Activated naive CD4-positive, alpha-beta T cell treated with anti-CD3 and anti-CD28 coated beads for 36 hours (primary cell): ENCODE measurements at regions of chr6 and their contacts with region 1.

Region 1: GRCh38 chr6:127855542-127856159 is 45.2 kb downstream of the THEMIS start:
- DNase-seq: peak; percentile 79
- H3K4me3 Mint-ChIP-seq: peak overlapping the region; percentile 54
- H3K27ac Mint-ChIP-seq: peak overlapping the region; percentile 59
- H3K4me1 Mint-ChIP-seq: peaks cover 73% of the 10 kb centered on the region
- H3K27me3 Mint-ChIP-seq: no peaks in the 10 kb centered on the region

Region 2: DNA sequence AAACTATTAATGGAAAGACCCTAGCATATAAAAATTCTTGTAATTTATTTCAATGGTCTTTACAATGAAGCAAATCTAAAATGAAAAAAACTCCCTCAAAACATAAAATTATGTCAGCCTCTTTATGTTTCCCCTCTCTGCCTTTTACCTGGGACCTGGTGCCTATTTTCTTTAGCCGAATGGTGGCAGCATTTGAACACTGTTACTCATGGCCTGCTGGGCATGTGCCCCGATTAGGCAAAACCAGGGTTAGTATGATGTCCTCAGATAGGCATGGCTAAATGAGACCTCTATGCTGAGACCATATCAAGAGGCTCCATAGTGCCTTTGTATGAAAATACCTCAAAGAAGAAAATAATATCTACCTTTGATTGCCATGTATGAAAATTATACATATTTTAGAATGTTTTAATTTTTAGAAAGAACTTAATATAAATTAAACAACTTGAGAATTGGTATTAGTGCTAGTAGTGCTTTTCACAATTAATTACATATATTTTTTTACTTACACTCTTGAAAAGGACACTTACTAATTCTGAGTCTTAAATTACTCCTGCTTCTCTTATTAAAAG is 301.1 kb before region 1 on chr6:
- CTCF ChIA-PET with region 1: no interaction called
- intact Hi-C with region 1: loop called (anchors 5 kb)
- DNase-seq: peak; percentile 57
- H3K4me3 Mint-ChIP-seq: no peak overlapping the region
- H3K27ac Mint-ChIP-seq: no peak overlapping the region
- H3K4me1 Mint-ChIP-seq: no peaks in the 10 kb centered on the region
- H3K27me3 Mint-ChIP-seq: peaks cover 14% of the 10 kb centered on the region

Region 3: DNA sequence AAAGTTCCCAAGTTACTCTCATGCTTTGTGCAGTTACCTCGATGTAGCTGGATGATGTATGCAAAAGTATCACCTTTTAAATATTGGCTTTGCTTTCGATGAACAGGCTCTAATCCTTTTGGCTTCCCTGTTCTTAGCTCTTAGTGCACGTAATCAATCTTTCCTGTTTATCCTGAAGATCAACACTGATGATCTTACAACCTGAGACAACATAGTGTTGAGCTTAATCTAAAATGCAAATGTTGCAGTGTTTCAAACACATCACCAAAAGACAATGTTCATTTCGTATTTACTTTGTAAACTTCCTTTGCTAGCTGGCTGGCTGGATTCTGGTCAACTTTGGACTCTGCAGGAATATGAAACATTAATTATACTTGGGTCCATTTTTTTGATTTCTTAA is 86.9 kb before region 1 on chr6:
- CTCF ChIA-PET with region 1: no interaction called
- intact Hi-C with region 1: no loop called
- DNase-seq: no peak
- H3K4me3 Mint-ChIP-seq: no peak overlapping the region
- H3K27ac Mint-ChIP-seq: no peak overlapping the region
- H3K4me1 Mint-ChIP-seq: peaks cover 55% of the 10 kb centered on the region
- H3K27me3 Mint-ChIP-seq: no peaks in the 10 kb centered on the region

Region 4: DNA sequence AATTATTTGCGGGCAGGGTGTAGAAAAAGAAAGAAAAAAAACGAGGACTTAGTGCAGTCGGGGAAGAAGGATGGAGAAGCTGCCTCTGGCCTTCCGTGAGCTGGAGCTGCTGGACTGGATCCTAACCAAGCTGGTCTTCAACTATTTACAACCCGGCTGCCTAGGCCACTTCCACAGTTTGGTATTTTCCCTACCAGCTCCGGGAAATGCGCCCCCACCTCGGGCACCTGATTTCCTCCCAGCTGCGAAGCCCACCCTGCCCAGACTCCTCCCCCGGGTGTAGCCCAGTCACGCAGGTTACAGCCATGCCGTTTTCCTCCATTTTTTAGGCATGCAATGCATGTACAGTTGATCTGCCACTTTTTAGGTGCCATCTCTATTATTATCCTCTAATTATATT is 24.0 kb after region 1 on chr6:
- CTCF ChIA-PET with region 1: interaction called, 9 read pairs
- intact Hi-C with region 1: loop called (anchors 1 kb)
- DNase-seq: peak; percentile 36
- H3K4me3 Mint-ChIP-seq: peak overlapping the region; percentile 67
- H3K27ac Mint-ChIP-seq: peak overlapping the region; percentile 56
- H3K4me1 Mint-ChIP-seq: peaks cover 70% of the 10 kb centered on the region
- H3K27me3 Mint-ChIP-seq: no peaks in the 10 kb centered on the region

Region 5: DNA sequence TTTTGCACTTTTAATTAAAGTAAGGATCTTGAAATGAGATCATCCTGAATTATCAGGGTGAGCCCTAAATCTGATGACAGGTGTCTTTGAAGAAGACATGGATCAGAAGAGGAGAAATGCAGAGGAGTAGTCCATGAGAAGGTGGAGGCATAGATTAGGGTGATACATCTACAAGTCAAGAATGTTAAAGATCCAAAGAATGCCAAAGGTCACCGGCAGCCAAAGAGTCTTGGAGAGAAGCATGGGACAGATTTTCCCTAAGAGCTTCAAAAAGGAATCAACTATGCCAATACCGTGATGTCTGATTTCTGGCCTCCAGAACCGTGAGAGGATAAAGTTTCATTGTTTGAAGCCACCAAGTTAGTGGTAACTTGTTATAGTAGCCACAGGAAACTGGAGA is 104.2 kb after region 1 on chr6:
- CTCF ChIA-PET with region 1: no interaction called
- intact Hi-C with region 1: no loop called
- DNase-seq: no peak
- H3K4me3 Mint-ChIP-seq: no peak overlapping the region
- H3K27ac Mint-ChIP-seq: no peak overlapping the region
- H3K4me1 Mint-ChIP-seq: peaks cover 11% of the 10 kb centered on the region
- H3K27me3 Mint-ChIP-seq: no peaks in the 10 kb centered on the region

Region 6: GRCh38 chr6:127980996-127981395 is 125.3 kb after region 1 on chr6:
- CTCF ChIA-PET with region 1: interaction called, 12 read pairs
- intact Hi-C with region 1: no loop called
- DNase-seq: no peak
- H3K4me3 Mint-ChIP-seq: no peak overlapping the region
- H3K27ac Mint-ChIP-seq: no peak overlapping the region
- H3K4me1 Mint-ChIP-seq: peaks cover 19% of the 10 kb centered on the region
- H3K27me3 Mint-ChIP-seq: no peaks in the 10 kb centered on the region

Region 7: GRCh38 chr6:128327890-128328289 is 472.2 kb after region 1 on chr6:
- CTCF ChIA-PET with region 1: interaction called, 29 read pairs
- intact Hi-C with region 1: loop called (anchors 1 kb)
- DNase-seq: peak; percentile 30
- H3K4me3 Mint-ChIP-seq: no peak overlapping the region
- H3K27ac Mint-ChIP-seq: no peak overlapping the region
- H3K4me1 Mint-ChIP-seq: no peaks in the 10 kb centered on the region
- H3K27me3 Mint-ChIP-seq: no peaks in the 10 kb centered on the region

Region 8: GRCh38 chr6:128725271-128726233 is 869.9 kb after region 1 on chr6:
- CTCF ChIA-PET with region 1: interaction called, 3 read pairs
- intact Hi-C with region 1: loop called (anchors 1 kb)
- DNase-seq: peak; percentile 31
- H3K4me3 Mint-ChIP-seq: no peak overlapping the region
- H3K27ac Mint-ChIP-seq: no peak overlapping the region
- H3K4me1 Mint-ChIP-seq: no peaks in the 10 kb centered on the region
- H3K27me3 Mint-ChIP-seq: peaks cover 24% of the 10 kb centered on the region